Activated CD4-positive, alpha-beta T cell treated with anti-CD3 and anti-CD28 coated beads, Interleukin-2, amount 10 ng/mL, durations not matched to agents 24 days and 14 days (primary cell): ENCODE measurements at regions of chr17 and their contacts with region 1.

Region 1: DNA sequence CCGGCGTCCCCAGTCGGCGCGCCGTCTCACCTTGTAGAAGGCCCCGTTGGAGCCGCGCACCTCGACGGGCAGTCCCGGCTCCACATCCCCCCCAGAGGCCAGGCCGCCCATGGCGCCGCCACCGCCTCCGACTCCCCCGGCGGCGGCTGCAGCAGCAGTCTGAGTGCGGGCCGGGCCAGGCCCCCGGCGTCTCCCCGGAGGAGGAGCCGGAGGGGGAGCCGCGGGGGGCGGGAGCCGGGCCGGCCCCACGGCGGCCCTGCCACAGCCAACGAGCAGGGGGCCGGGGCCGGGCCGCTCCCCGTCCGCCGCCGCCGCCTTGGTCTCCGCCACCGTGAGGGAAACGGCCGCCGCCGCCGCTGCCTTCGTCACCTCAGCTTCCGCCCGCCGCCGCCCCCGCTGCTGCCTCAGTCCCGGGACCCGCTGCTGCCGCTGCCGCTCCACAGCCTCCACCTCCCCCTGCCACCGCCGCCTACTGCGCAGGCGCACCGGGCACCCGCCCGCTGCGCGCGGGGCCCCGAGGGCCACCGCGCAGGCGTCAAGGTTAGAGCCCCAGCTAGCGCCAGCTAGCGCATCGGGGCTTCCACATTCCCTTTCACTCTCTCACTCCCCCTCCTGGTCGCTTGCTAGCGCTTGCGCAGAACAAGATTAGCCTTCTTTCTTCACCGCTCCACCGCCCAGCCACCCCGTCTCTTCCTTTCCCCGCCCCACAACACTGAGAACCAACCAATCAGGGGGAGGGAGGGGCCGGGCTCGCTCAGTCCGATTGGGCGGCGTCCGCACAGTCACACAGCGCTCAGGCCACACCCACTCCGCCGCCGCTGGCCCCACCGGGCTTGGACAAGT is at the start of gene FXR2:
- DNase-seq: peak; percentile 99
- H3K4me3 Mint-ChIP-seq: peak within 1 kb of the TSS; percentile 87
- H3K27ac Mint-ChIP-seq: peak within 1 kb of the TSS; percentile 91
- H3K4me1 Mint-ChIP-seq: peaks cover 33% of the 10 kb centered on the region
- H3K27me3 Mint-ChIP-seq: no peaks in the 10 kb centered on the region
- total RNA-seq, gene FXR2: 62.6 and 64.4 TPM in 2 replicates

Region 2: GRCh38 chr17:7650509-7651096 is 36.0 kb after region 1 on chr17 and contains the start of gene ATP1B2:
- intact Hi-C with region 1: loop called (anchors 5 kb)
- DNase-seq: peak; percentile 92
- H3K4me3 Mint-ChIP-seq: peak within 1 kb of the TSS; percentile 82
- H3K27ac Mint-ChIP-seq: peak within 1 kb of the TSS; percentile 23
- H3K4me1 Mint-ChIP-seq: peaks cover 15% of the 10 kb centered on the region
- H3K27me3 Mint-ChIP-seq: peaks cover 57% of the 10 kb centered on the region
- total RNA-seq, gene ATP1B2: 0.14 and 0.37 TPM in 2 replicates

Region 3: GRCh38 chr17:8029135-8029534 is 414.5 kb after region 1 on chr17:
- intact Hi-C with region 1: no loop called
- DNase-seq: no peak
- H3K4me3 Mint-ChIP-seq: no peak overlapping the region
- H3K27ac Mint-ChIP-seq: no peak overlapping the region
- H3K4me1 Mint-ChIP-seq: no peaks in the 10 kb centered on the region
- H3K27me3 Mint-ChIP-seq: peaks cover 40% of the 10 kb centered on the region